ENCODE measurements at regions of chr9 and their contacts with region 1.

Region 1: GRCh38 chr9:105475302-105475701 is 27.5 kb downstream of the FSD1L start:
- DNase-seq: no peak
- H3K4me3 ChIP-seq: no peak overlapping the region
- H3K27ac ChIP-seq: no peak overlapping the region
- H3K4me1 ChIP-seq: no peaks in the 10 kb centered on the region
- H3K27me3 ChIP-seq: no peaks in the 10 kb centered on the region
- CTCF ChIP-seq: no peak; the same call in 1 of the 2 replicates

Region 2: DNA sequence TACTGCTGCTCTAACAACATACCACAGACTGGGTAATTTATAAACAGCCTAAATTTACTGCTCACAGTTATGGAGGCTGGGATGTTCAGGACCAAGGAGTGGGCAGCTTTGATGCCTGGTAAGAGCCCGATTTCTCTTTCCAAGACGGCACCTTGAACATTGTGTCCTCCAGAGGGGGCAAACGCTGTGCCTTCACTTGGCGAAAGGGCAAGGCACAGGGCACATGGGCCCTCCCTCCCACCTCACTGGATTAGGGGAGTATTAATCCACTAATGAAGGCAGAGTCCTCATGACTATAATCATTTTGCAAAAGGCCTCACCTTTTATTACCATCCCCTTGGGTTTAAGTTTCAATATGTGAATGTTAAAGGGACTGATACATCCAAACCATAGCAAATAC is 616.8 kb after region 1 on chr9:
- CTCF ChIA-PET with region 1: interaction called, 14 read pairs
- POLR2A ChIA-PET with region 1: no interaction called
- intact Hi-C with region 1: no loop called
- DNase-seq: no peak
- H3K4me3 ChIP-seq: no peak overlapping the region
- H3K27ac ChIP-seq: no peak overlapping the region
- H3K4me1 ChIP-seq: no peaks in the 10 kb centered on the region
- H3K27me3 ChIP-seq: no peaks in the 10 kb centered on the region
- CTCF ChIP-seq: no peak